Panc1 (cell line): ENCODE measurements at regions of chr11 and their contacts with region 1.

Region 1: DNA sequence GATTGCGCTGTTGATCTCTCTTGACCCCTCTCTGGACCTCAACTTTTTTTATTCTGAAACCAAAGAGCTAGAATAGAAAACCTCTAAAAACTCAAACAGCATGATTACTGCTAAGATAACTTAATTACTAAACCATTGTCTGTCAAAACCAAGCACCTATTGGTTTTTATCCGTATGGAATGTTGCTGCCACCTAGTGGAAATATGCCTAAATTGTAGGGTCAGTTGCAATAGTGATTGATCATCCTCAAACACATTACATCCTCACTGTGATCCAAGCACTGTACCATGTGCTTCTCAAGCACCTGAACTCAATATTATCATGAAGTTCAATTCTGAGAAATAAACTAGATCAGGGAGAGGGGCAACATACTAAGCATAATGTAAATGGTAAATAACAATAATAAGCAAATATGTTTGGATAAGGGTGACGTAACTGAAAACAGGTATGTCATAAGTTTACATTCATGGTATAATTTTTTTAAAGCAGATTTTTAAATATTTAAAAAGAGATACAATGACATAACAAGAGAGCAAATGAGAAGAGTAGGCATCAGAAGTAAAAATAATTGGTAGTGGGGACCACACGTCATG is 3.8 kb upstream of the OR5A2 start:
- DNase-seq: peak; percentile 25
- ATAC-seq: peak; percentile 73; the same call in 1 of the 2 replicates
- H3K4me3 ChIP-seq: no peak overlapping the region
- H3K27ac ChIP-seq: no peak overlapping the region
- H3K4me1 ChIP-seq: no peaks in the 10 kb centered on the region
- H3K27me3 ChIP-seq: peaks cover 8% of the 10 kb centered on the region; the same call in 1 of the 2 replicates
- CTCF ChIP-seq: peak; percentile 82; the same call in 1 of the 2 replicates

Region 2: GRCh38 chr11:59171508-59172322 is 258.3 kb before region 1 on chr11 and contains the start of gene DTX4:
- CTCF ChIA-PET with region 1: no interaction called
- POLR2A ChIA-PET with region 1: no interaction called
- in situ Hi-C with region 1: no loop called
- intact Hi-C with region 1: loop called (anchors 1 kb)
- DNase-seq: peak; percentile 39
- ATAC-seq: peak; percentile 95
- H3K4me3 ChIP-seq: peak within 1 kb of the TSS; percentile 43 to 61
- H3K27ac ChIP-seq: no peak within 1 kb of the TSS
- H3K4me1 ChIP-seq: peaks cover 7% of the 10 kb centered on the region
- H3K27me3 ChIP-seq: peaks cover 11% of the 10 kb centered on the region
- CTCF ChIP-seq: peak; percentile 95
- total RNA-seq, gene DTX4: 0.21 TPM

Region 3: DNA sequence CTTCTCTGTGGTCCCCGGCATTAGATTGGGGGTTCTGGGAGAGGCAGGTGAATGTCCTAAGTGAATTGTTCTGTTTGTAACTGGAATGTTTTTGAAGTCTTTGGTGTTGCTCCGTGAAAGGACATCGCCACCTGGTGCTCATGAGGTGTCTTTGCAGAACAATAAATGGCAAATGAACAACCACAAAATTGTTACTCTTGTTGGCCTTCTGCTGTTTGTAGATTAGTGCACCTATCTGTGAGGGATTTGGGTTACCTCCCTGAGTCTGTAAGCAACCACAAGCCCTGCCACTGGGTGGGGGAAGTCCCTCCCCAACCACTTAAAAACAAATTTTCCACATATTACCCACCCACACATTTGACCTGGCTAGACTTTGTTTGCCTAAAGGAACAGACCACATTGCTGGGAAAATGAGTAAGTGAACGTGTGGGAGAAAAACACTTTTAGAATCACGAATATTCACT is 222.0 kb before region 1 on chr11:
- CTCF ChIA-PET with region 1: no interaction called
- POLR2A ChIA-PET with region 1: no interaction called
- in situ Hi-C with region 1: no loop called
- intact Hi-C with region 1: loop called (anchors 1 kb)
- DNase-seq: peak; percentile 33
- ATAC-seq: 0 out of 2 replicates have a peak, but pooled peaks have one; percentile 45
- H3K4me3 ChIP-seq: no peak overlapping the region
- H3K27ac ChIP-seq: no peak overlapping the region
- H3K4me1 ChIP-seq: no peaks in the 10 kb centered on the region
- H3K27me3 ChIP-seq: no peaks in the 10 kb centered on the region; the same call in 1 of the 2 replicates
- CTCF ChIP-seq: peak; percentile 84

Region 4: DNA sequence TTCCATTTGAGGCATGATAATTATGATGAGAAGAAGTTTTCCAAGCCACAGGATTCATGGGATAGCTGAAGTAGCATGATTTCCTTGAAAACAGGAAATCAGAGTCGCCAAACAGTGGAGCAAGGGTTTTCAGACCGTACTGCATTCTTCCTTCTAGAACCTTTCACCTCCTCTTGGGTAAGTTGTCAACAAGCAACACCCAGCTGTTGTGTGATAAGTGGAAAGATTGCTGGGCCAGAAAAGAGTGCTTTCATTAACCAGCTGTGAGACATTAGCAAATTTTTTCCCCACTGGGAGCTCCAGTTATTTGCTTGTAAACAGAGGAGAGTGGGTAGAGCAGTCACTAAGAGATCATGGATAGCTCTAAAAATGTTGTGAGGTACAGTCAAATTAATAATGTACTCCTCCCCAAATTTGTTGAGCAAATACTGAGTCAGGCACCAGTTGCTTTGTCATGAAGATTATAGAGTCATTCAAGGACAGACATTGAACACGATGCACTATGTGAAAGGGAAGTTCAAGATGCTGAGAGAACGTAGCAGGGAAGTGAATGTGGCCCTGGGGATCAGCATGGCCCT is 205.6 kb before region 1 on chr11:
- CTCF ChIA-PET with region 1: no interaction called
- POLR2A ChIA-PET with region 1: no interaction called
- in situ Hi-C with region 1: no loop called
- intact Hi-C with region 1: no loop called
- DNase-seq: no peak
- ATAC-seq: no peak
- H3K4me3 ChIP-seq: no peak overlapping the region
- H3K27ac ChIP-seq: no peak overlapping the region
- H3K4me1 ChIP-seq: no peaks in the 10 kb centered on the region
- H3K27me3 ChIP-seq: peaks cover 3% of the 10 kb centered on the region; the same call in 1 of the 2 replicates
- CTCF ChIP-seq: no peak

Region 5: GRCh38 chr11:59263225-59263894 is 166.7 kb before region 1 on chr11:
- CTCF ChIA-PET with region 1: no interaction called
- POLR2A ChIA-PET with region 1: no interaction called
- in situ Hi-C with region 1: no loop called
- intact Hi-C with region 1: loop called (anchors 10 kb)
- DNase-seq: no peak
- ATAC-seq: peak; percentile 60; the same call in 1 of the 2 replicates
- H3K4me3 ChIP-seq: no peak overlapping the region
- H3K27ac ChIP-seq: no peak overlapping the region
- H3K4me1 ChIP-seq: no peaks in the 10 kb centered on the region
- H3K27me3 ChIP-seq: peaks cover 1% of the 10 kb centered on the region; the same call in 1 of the 2 replicates
- CTCF ChIP-seq: no peak

Region 6: GRCh38 chr11:59680287-59681154 is 250.5 kb after region 1 on chr11:
- CTCF ChIA-PET with region 1: no interaction called
- POLR2A ChIA-PET with region 1: no interaction called
- in situ Hi-C with region 1: no loop called
- intact Hi-C with region 1: loop called (anchors 5 kb)
- DNase-seq: peak; percentile 51
- ATAC-seq: peak; percentile 100
- H3K4me3 ChIP-seq: no peak overlapping the region
- H3K27ac ChIP-seq: no peak overlapping the region
- H3K4me1 ChIP-seq: no peaks in the 10 kb centered on the region
- H3K27me3 ChIP-seq: no peaks in the 10 kb centered on the region
- CTCF ChIP-seq: peak; percentile 87